Activated CD8-positive, alpha-beta T cell treated with anti-CD3 and anti-CD28 coated beads for 36 hours (primary cell): ENCODE measurements at regions of chr3 and their contacts with region 1.

Region 1: GRCh38 chr3:9302425-9303181 is 53.2 kb upstream of the SRGAP3 start:
- DNase-seq: peak; percentile 84
- ATAC-seq: peak; percentile 94
- H3K4me3 Mint-ChIP-seq: no peak overlapping the region
- H3K27ac Mint-ChIP-seq: no peak overlapping the region
- H3K4me1 Mint-ChIP-seq: peaks cover 12% of the 10 kb centered on the region
- H3K27me3 Mint-ChIP-seq: peaks cover 3% of the 10 kb centered on the region
- CTCF ChIP-seq: peak; percentile 91

Region 2: GRCh38 chr3:8970971-8971589 is 331.5 kb before region 1 on chr3:
- CTCF ChIA-PET with region 1: interaction called, 118 read pairs
- POLR2A ChIA-PET with region 1: interaction called, 3 read pairs
- intact Hi-C with region 1: loop called (anchors 1 kb)
- DNase-seq: peak; percentile 81
- ATAC-seq: peak; percentile 90
- H3K4me3 Mint-ChIP-seq: no peak overlapping the region
- H3K27ac Mint-ChIP-seq: no peak overlapping the region
- H3K4me1 Mint-ChIP-seq: peaks cover 2% of the 10 kb centered on the region
- H3K27me3 Mint-ChIP-seq: peaks cover 9% of the 10 kb centered on the region
- CTCF ChIP-seq: peak; percentile 94

Region 3: DNA sequence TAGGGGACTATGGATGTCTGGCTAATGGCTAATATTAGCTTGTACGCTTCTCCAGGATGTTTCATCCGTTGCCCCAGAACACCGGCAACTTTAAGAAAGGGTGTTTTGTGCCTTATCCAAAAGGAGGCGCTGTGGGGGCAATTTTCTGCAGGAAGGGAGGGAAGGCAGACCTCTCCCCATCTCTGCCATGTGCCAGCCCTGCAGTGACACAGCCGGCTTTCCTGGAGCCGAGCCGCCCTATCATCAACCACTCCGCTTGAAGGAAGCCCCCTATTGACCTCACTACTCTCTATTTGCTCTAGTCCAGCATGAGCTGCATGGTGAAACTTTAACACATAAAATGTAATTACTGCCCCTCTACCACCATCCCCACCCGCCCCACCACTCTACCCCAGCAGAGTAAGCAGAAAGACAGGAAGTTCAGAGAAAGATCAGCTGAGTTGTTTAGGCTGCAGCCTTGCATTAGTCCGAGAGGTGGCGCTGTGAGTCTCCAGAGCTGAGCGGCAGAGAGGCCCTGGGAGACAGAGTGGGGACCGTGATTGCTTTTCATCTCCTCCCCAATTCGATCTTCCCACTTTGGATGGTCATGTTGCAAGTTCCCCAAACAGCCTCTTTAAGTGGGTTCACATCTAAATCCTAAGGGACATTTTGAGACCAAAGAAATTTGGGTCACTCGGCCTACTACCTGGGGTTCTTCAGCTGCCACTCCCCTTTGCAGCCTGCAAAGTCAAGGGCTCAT is 314.8 kb before region 1 on chr3:
- CTCF ChIA-PET with region 1: interaction called, 75 read pairs
- POLR2A ChIA-PET with region 1: no interaction called
- intact Hi-C with region 1: loop called (anchors 5 kb)
- DNase-seq: peak; percentile 79
- ATAC-seq: peak; percentile 96
- H3K4me3 Mint-ChIP-seq: no peak overlapping the region
- H3K27ac Mint-ChIP-seq: no peak overlapping the region
- H3K4me1 Mint-ChIP-seq: peaks cover 2% of the 10 kb centered on the region
- H3K27me3 Mint-ChIP-seq: no peaks in the 10 kb centered on the region
- CTCF ChIP-seq: peak; percentile 86

Region 4: DNA sequence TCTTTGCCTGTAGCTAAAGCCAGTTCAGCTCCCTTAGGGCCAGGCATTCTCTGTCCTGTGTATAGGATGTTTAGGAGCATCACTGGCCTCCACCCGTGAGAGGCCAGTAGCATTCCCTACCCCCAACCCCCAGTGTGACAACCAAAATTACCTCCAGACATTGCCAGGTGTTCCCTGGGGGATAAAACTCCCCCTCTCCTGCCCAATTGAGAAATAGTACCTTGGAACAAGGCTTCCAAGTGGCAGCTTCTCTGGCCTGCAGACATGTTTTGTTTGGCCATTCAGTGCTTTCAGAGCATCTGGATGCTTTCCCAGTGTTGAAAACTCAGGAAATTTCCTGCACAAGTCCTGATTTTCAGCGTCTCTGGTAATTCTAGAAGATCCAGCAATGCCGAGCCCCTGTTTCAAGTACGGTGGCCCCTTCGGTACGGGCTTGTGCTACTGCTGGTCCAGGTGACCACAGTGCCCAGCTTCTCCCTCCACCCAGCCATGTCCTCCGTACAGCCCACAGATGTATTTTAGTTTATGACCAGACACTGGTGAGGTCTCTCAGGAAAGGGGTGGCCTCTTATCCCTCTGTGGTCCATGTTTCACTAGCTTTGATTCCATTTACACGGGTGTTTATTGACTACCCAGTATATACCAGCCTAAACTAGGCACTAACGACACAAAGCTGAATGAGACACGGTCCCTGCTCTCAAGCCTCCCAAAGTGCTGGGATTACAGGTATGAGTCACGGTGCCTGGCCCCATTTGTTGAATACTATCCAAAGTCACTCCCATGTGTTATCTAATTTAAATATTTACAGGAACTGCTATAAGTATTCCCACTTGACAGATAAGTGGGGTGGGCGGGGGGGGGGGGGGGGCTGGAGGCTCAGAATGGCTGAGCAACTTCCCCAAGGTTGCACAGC is 213.9 kb before region 1 on chr3:
- CTCF ChIA-PET with region 1: interaction called, 6 read pairs
- POLR2A ChIA-PET with region 1: no interaction called
- intact Hi-C with region 1: loop called (anchors 10 kb)
- DNase-seq: no peak
- ATAC-seq: no peak
- H3K4me3 Mint-ChIP-seq: no peak overlapping the region
- H3K27ac Mint-ChIP-seq: no peak overlapping the region
- H3K4me1 Mint-ChIP-seq: no peaks in the 10 kb centered on the region
- H3K27me3 Mint-ChIP-seq: no peaks in the 10 kb centered on the region
- CTCF ChIP-seq: no peak

Region 5: GRCh38 chr3:9249273-9250192 is 53.1 kb before region 1 on chr3 and contains the start of gene SRGAP3:
- CTCF ChIA-PET with region 1: interaction called, 12 read pairs
- POLR2A ChIA-PET with region 1: interaction called, 3 read pairs
- intact Hi-C with region 1: no loop called
- DNase-seq: peak; percentile 91
- ATAC-seq: peak; percentile 100
- H3K4me3 Mint-ChIP-seq: peak within 1 kb of the TSS; percentile 75
- H3K27ac Mint-ChIP-seq: no peak within 1 kb of the TSS
- H3K4me1 Mint-ChIP-seq: peaks cover 21% of the 10 kb centered on the region
- H3K27me3 Mint-ChIP-seq: peaks cover 5% of the 10 kb centered on the region
- CTCF ChIP-seq: peak; percentile 44
- total RNA-seq, gene SRGAP3: 1.8 to 2.5 TPM

Region 6: GRCh38 chr3:9290566-9290965 is 12.0 kb before region 1 on chr3:
- CTCF ChIA-PET with region 1: interaction called, 11 read pairs
- POLR2A ChIA-PET with region 1: no interaction called
- intact Hi-C with region 1: no loop called
- DNase-seq: no peak
- ATAC-seq: no peak
- H3K4me3 Mint-ChIP-seq: no peak overlapping the region
- H3K27ac Mint-ChIP-seq: no peak overlapping the region
- H3K4me1 Mint-ChIP-seq: no peaks in the 10 kb centered on the region
- H3K27me3 Mint-ChIP-seq: peaks cover 7% of the 10 kb centered on the region
- CTCF ChIP-seq: no peak